Naive thymus-derived CD4-positive, alpha-beta T cell (primary cell): ENCODE measurements at regions of chr6 and their contacts with region 1.

Region 1: DNA sequence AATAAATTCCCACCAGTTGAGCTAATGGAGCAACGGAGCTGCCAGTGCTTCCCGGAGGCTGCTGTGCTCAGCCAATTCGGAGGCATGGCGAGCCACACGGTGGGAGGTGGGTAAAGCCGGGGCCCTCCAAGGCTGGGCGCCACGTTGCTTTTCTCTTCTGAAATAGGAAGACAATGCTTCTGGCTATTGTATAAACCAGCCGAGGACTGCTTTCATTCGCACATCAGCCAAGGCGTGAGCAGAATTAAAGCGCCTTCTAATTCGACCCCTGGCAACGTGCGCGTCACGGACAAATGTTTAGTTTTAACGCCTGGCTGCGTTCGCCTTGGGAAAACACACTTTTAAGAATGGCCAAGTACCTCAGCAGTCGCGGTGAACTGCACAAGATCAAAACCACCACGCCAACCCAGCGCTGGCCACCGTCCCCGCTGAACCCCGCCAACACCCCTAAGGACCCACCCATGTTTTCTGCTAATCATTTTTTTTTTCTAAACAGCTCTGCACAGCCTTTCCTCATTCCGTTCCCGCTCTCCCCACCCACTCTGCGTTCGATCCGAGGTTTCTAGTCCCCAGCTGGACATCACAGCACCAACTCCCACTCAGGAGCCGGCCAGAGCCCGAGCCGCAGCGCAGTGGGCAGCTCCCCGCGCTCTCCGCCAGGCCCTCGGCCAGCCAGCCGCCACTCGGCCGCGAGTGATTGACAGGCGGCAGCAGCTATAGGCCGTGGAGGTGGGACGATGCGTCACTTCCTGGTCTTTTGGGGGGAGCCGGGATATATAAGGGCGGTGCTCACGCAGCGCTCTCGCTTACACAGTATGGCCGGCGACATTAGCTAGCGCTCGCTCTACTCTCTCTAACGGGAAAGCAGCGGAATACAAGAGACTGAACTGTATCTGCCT is at the start of gene AMD1:
- DNase-seq: peak; percentile 87 to 97 (median 96)
- ATAC-seq: peak; percentile 85
- H3K4me3 ChIP-seq: peak within 1 kb of the TSS; percentile 99
- H3K4me3 Mint-ChIP-seq: peak within 1 kb of the TSS in 9 of 10 donors; percentile 94 to 99 (median 99)
- H3K27ac ChIP-seq: peak within 1 kb of the TSS; percentile 73
- H3K27ac Mint-ChIP-seq: peak within 1 kb of the TSS in 8 of 9 donors; percentile 96 to 100 (median 99)
- H3K4me1 ChIP-seq: peaks cover 26 to 28% of the 10 kb centered on the region in 2 donors
- H3K4me1 Mint-ChIP-seq: peaks cover 19 to 28% (median 27%) of the 10 kb centered on the region in 7 donors
- H3K27me3 ChIP-seq: no peaks in the 10 kb centered on the region
- H3K27me3 Mint-ChIP-seq: no peaks in the 10 kb centered on the region
- total RNA-seq, gene AMD1: 61.1 to 105 (median 73.8) TPM

Region 2: GRCh38 chr6:109009236-109009961 is 1864.8 kb before region 1 on chr6:
- CTCF ChIA-PET with region 1: no interaction called
- POLR2A ChIA-PET with region 1: no interaction called
- intact Hi-C with region 1: loop called in 1 of 2 experiments (anchors 10 kb)
- DNase-seq: peak; percentile 85 to 91 (median 90)
- ATAC-seq: peak; percentile 98
- H3K4me3 ChIP-seq: peak overlapping the region; percentile 84
- H3K4me3 Mint-ChIP-seq: peak overlapping the region; percentile 91 to 99 (median 96)
- H3K27ac ChIP-seq: peak overlapping the region; percentile 99
- H3K27ac Mint-ChIP-seq: peak overlapping the region; percentile 94 to 100 (median 98)
- H3K4me1 ChIP-seq: peaks cover 22 to 40% of the 10 kb centered on the region in 2 donors
- H3K4me1 Mint-ChIP-seq: peaks cover 26 to 81% (median 72%) of the 10 kb centered on the region in 7 donors
- H3K27me3 ChIP-seq: no peaks in the 10 kb centered on the region
- H3K27me3 Mint-ChIP-seq: peaks cover 0 to 3% (median 0%) of the 10 kb centered on the region in 5 donors

Region 3: DNA sequence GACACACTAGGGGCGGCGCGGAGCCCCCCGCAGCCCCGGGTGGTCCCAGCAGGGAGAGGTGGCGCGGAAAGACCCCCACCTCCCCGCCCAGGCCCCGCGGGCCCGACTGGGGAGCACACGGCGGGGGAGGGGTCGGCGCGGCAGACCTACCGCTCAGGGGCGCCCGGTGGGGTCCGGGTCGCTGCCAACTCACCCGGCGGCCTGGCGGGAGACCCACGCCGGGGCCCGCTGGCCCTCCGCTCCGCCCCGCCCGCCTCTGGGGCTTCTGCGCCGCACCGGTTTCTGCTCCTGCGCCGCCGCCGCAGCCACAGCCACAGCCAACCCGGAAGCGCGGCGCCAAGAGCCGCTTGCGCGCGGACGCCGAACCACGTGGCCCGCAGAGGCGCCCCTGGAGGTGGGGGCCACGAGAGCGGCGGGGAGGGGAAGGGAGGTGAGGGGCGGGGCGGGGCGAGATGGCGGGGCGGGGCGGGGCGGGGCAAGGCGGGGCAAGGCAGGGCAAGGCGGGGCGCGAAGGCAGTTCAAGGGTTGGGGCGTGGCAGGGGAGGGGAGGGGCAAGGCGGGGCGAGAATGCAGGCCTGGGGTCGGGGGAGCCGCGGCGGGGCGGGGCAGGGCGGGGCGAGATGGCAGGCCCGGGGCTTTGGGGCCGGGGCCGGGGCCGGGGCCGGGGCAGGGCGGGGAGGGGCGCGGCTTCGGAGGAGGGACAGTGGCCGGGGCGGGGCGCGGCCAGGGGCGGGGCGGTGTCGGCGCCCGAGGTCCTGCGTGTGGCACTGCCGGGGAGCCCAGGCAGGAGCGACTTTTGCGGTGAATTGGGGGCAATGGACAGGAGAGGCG is 1391.1 kb before region 1 on chr6 and contains the start of gene ZBTB24:
- CTCF ChIA-PET with region 1: no interaction called
- POLR2A ChIA-PET with region 1: no interaction called
- intact Hi-C with region 1: loop called in 1 of 2 experiments (anchors 10 kb)
- DNase-seq: peak; percentile 86 to 92 (median 89)
- ATAC-seq: peak; percentile 94
- H3K4me3 ChIP-seq: peak within 1 kb of the TSS; percentile 79
- H3K4me3 Mint-ChIP-seq: peak within 1 kb of the TSS; percentile 92 to 99 (median 97)
- H3K27ac ChIP-seq: peak within 1 kb of the TSS; percentile 84
- H3K27ac Mint-ChIP-seq: peak within 1 kb of the TSS; percentile 42 to 95 (median 91)
- H3K4me1 ChIP-seq: peaks cover 38 to 39% of the 10 kb centered on the region in 2 donors
- H3K4me1 Mint-ChIP-seq: peaks cover 38 to 55% (median 51%) of the 10 kb centered on the region in 7 donors
- H3K27me3 ChIP-seq: no peaks in the 10 kb centered on the region
- H3K27me3 Mint-ChIP-seq: peaks cover 0 to 7% (median 0%) of the 10 kb centered on the region in 5 donors
- total RNA-seq, gene ZBTB24: 10.2 to 26.6 (median 23.4) TPM

Region 4: DNA sequence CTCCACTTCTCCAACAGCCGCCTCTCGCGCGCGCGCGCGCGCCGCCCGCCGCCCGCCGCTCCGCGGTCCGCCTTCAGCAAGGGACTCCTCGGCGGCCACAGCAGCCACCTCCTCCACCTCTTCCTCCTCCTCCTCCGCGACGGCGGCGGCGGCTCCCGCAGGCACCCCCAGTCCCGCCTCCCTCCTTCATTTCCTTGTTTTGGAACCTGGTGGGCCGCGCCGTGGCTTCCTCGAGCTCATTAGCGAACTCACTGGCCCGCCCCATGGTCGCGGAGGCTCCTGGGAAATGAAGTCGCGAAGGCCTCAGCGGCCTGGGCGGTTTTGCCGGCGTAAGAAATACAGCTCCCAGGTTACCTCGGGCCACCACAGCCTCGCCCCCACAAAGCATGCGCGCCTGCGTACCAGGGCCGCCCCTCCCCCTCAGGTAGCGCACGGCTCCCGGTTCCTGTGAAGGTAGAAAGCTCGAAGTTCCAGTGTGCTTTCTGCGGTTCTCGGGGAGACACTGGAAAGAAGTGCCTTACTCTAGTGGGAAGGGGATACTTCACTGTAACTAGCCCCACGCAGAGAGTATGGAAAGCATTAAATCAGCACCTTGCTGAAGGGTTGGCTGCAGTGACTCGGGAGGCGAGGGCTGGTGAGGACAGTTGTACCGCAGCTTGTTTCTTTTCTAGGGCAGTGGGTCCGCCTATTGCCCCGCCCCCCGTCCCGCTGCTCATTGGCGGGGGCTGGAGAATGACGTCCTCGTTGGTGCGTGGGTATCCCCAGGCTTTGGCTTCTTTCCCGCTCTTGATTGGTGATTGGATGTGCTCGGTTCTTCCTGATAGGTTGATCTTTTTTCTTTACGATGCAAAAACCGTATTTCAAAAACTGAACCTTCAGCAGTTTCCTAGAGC is 58.8 kb before region 1 on chr6 and contains the start of gene CDK19:
- CTCF ChIA-PET with region 1: interaction called, 7 read pairs
- POLR2A ChIA-PET with region 1: interaction called, 413 read pairs
- intact Hi-C with region 1: loop called (anchors 1 kb)
- DNase-seq: peak; percentile 94 to 99 (median 99)
- ATAC-seq: peak; percentile 87
- H3K4me3 ChIP-seq: peak within 1 kb of the TSS; percentile 97
- H3K4me3 Mint-ChIP-seq: peak within 1 kb of the TSS; percentile 94 to 100 (median 98)
- H3K27ac ChIP-seq: peak within 1 kb of the TSS; percentile 89
- H3K27ac Mint-ChIP-seq: peak within 1 kb of the TSS; percentile 89 to 100 (median 99)
- H3K4me1 ChIP-seq: peaks cover 11 to 15% of the 10 kb centered on the region in 2 donors
- H3K4me1 Mint-ChIP-seq: peaks cover 14 to 46% (median 26%) of the 10 kb centered on the region in 7 donors
- H3K27me3 ChIP-seq: no peaks in the 10 kb centered on the region
- H3K27me3 Mint-ChIP-seq: no peaks in the 10 kb centered on the region
- total RNA-seq, gene CDK19: 11.3 to 24.4 (median 21.0) TPM

Region 5: DNA sequence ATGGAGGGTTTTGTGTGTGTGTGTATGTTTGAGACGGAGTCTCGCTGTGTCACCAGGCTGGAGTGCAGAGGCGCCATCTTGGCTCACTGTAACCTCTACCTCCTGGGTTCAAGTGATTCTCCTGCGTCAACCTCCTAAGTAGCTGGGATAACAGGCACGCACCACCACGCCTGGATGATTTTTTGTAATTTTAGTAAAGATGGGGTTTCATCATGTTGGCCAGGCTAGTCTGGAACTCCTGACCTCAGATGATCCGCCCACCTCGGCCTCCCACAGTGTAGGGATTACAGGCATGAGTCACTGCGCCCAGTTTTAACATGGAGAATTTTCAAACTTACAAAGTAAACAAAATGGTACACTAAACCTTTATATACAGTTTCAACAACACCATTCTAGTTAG is 23.2 kb after region 1 on chr6:
- CTCF ChIA-PET with region 1: interaction called, 3 read pairs
- POLR2A ChIA-PET with region 1: interaction called, 8 read pairs
- intact Hi-C with region 1: loop called in 1 of 2 experiments (anchors 2 kb)
- DNase-seq: no peak
- ATAC-seq: peak; percentile 10
- H3K4me3 ChIP-seq: no peak overlapping the region
- H3K4me3 Mint-ChIP-seq: no peak overlapping the region
- H3K27ac ChIP-seq: no peak overlapping the region
- H3K27ac Mint-ChIP-seq: peak overlapping the region in 2 of 9 donors; percentile 5 to 72
- H3K4me1 ChIP-seq: no peaks in the 10 kb centered on the region
- H3K4me1 Mint-ChIP-seq: peaks cover 0 to 4% (median 0%) of the 10 kb centered on the region in 7 donors
- H3K27me3 ChIP-seq: no peaks in the 10 kb centered on the region
- H3K27me3 Mint-ChIP-seq: no peaks in the 10 kb centered on the region

Region 6: DNA sequence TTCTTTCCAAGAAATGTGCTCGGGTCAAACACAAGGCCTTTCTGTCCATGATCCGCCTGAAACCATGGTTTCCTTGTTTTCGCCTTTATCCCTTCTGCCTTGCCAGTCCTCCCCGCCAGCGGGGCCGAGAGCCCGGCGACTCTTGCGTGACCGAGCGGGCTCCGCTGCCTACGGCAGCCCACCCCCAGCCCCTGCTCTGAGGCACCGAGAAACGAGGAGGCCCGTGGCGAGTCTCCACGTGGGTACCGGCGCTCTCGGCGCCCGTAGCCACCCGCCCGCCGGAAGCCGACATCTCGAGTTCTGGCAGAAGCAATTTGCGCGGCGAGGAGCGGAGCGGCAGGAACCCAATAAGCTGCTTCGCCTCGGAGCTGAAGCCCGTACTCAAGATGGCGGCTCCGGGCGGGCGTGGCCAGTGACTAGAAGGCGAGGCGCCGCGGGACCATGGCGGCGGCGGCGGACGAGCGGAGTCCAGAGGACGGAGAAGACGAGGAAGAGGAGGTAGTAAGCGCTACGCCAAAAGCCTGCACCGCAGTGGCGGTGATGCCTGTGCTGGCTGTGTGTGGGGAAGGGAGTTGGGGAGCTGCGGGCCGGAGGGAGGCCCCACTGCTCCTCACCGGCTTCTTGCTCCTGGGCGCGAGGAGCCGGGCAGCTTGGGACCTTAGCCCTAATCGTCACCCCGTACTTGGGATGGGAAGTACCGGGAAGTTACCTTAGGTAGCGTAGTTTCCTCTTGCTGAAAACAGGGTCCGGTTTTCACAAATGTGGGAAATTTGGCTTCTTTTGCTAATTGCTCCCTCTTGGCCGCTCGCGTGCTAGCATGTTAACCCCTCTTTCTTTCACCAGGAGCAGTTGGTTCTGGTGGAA is 84.3 kb after region 1 on chr6 and contains the start of gene GTF3C6:
- CTCF ChIA-PET with region 1: interaction called, 6 read pairs
- POLR2A ChIA-PET with region 1: interaction called, 54 read pairs
- intact Hi-C with region 1: loop called (anchors 1 kb)
- DNase-seq: peak; percentile 85 to 94 (median 91)
- ATAC-seq: peak; percentile 99
- H3K4me3 ChIP-seq: peak within 1 kb of the TSS; percentile 86
- H3K4me3 Mint-ChIP-seq: peak within 1 kb of the TSS; percentile 95 to 99 (median 96)
- H3K27ac ChIP-seq: peak within 1 kb of the TSS; percentile 81
- H3K27ac Mint-ChIP-seq: peak within 1 kb of the TSS; percentile 96 to 99 (median 97)
- H3K4me1 ChIP-seq: peaks cover 4% of the 10 kb centered on the region in 2 donors
- H3K4me1 Mint-ChIP-seq: peaks cover 13 to 27% (median 20%) of the 10 kb centered on the region in 7 donors
- H3K27me3 ChIP-seq: no peaks in the 10 kb centered on the region
- H3K27me3 Mint-ChIP-seq: peaks cover 0 to 7% (median 0%) of the 10 kb centered on the region in 5 donors
- total RNA-seq, gene GTF3C6: 18.1 to 100 (median 29.9) TPM

Region 7: DNA sequence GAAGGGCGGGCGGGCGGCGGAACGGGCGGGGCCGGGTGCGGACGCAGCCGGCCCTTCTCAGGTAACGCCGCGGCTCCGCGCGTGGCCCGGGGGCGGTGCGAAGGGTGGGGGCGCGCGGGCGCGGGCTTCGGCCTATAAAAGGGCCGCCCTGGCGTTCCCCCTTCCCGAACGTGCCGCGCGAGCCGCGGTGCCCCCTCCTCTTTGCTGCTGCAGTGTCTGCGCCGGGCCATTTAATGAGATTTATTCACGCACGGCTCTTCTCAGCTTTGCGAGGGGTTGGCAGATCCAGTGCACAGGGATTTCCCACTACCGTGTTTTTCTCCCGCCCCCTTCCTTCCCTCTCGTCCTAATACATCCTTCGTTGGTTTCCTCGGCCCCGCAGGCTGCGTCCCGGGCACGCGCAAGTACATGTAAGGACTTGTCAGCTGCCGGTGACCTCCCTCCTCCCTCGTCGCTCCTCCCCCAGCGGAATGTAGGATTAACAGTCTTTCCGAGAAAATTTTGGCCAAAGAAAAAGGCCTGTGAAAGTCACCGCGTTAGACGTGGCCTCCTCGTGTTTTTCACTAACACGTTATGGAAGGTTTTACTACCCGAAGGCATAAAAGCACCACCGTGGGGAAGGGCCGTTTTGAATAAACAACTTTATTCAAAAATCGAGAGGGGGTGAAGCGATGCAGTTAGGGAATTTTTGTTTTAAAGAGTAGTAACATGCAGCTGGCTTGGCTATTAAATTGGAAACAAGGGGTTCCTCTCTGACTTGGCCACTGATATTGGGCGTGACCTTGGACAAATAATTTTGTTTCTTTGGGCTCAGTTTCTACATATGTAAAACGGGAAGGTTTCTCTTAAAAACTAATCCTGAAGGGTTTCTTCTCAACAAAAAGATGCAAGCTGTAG is 609.8 kb after region 1 on chr6:
- CTCF ChIA-PET with region 1: no interaction called
- POLR2A ChIA-PET with region 1: interaction called, 3 read pairs
- intact Hi-C with region 1: loop called (anchors 2 to 5 kb)
- DNase-seq: peak in 6 of 9 donors; percentile 80 to 89 (median 86)
- ATAC-seq: peak; percentile 79
- H3K4me3 ChIP-seq: peak overlapping the region; percentile 93
- H3K4me3 Mint-ChIP-seq: peak overlapping the region; percentile 96 to 100 (median 98)
- H3K27ac ChIP-seq: peak overlapping the region; percentile 99
- H3K27ac Mint-ChIP-seq: peak overlapping the region; percentile 95 to 99 (median 99)
- H3K4me1 ChIP-seq: peaks cover 14 to 29% of the 10 kb centered on the region in 2 donors
- H3K4me1 Mint-ChIP-seq: peaks cover 28 to 59% (median 52%) of the 10 kb centered on the region in 7 donors
- H3K27me3 ChIP-seq: no peaks in the 10 kb centered on the region
- H3K27me3 Mint-ChIP-seq: peaks cover 0 to 3% (median 0%) of the 10 kb centered on the region in 5 donors

Region 8: DNA sequence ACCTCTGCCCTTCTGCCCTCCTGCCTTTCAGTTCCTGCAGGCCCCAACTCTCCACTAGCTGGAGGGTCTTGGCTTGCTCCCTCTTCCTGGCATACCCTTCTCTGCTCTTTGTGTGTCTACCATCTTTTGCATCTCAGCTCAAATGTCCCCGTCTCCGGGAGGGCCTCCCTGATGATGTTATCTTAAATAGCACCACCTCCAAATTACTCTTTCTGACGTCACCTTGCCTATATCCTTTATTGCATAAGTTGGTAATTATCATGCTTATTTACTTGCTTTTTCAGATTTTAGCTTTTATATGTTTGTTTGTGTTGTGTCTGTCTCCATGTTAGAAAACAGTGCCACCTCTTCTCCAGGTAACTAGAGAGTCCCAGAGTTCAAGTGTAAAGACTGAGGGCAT is 1035.0 kb after region 1 on chr6:
- CTCF ChIA-PET with region 1: no interaction called
- POLR2A ChIA-PET with region 1: no interaction called
- intact Hi-C with region 1: no loop called
- DNase-seq: no peak
- ATAC-seq: no peak
- H3K4me3 ChIP-seq: no peak overlapping the region
- H3K4me3 Mint-ChIP-seq: no peak overlapping the region
- H3K27ac ChIP-seq: no peak overlapping the region
- H3K27ac Mint-ChIP-seq: peak overlapping the region in 1 of 9 donors; percentile 1
- H3K4me1 ChIP-seq: no peaks in the 10 kb centered on the region
- H3K4me1 Mint-ChIP-seq: peaks cover 0 to 16% (median 7%) of the 10 kb centered on the region in 7 donors
- H3K27me3 ChIP-seq: no peaks in the 10 kb centered on the region
- H3K27me3 Mint-ChIP-seq: no peaks in the 10 kb centered on the region

Region 9: DNA sequence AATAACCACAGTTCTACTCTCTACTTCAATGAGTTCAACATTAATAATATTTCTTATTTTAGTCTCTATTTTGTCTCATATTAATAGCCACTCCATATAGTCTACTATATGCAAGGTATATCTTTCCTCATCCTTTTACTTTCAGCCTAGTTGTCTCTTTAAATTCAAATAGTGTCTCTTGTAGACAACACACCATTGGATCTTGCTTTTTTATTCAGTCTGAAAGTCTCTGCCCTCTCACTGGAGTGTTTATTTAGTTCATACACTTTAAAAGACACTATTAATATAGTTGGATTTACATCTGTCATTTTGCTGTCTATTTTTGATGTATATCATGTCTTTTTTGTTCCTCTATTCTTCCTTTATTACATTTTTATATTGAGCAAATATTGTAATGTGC is 1576.4 kb after region 1 on chr6:
- CTCF ChIA-PET with region 1: no interaction called
- POLR2A ChIA-PET with region 1: no interaction called
- intact Hi-C with region 1: no loop called
- DNase-seq: no peak
- ATAC-seq: no peak
- H3K4me3 ChIP-seq: no peak overlapping the region
- H3K4me3 Mint-ChIP-seq: no peak overlapping the region
- H3K27ac ChIP-seq: no peak overlapping the region
- H3K27ac Mint-ChIP-seq: no peak overlapping the region
- H3K4me1 ChIP-seq: no peaks in the 10 kb centered on the region
- H3K4me1 Mint-ChIP-seq: no peaks in the 10 kb centered on the region
- H3K27me3 ChIP-seq: no peaks in the 10 kb centered on the region
- H3K27me3 Mint-ChIP-seq: no peaks in the 10 kb centered on the region